ENCODE measurements at regions of chr3 and their contacts with region 1.

Region 1: DNA sequence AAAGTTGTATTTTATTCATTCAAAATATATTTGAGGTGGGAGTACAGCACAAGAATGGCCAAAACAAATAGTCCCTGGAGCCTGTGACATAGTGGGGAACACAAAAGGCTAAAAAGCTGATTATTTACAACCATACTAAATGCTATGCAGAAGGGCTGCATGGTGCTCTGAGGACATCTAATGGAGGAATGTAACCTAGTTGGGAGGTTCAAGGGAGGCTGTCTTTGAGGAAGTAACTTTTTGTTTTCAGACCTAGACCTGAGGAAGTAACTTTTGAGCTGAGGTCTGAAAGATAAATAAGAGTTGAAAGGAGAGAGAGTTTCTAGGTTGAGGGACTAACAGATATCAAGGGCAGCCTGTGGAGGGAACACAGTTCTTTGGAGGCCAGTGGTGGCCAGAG is 34.8 kb upstream of the RASA2 start:
- DNase-seq: no peak
- ATAC-seq: peak; percentile 77 to 86 (median 82)
- H3K4me3 ChIP-seq: no peak overlapping the region
- H3K27ac ChIP-seq: no peak overlapping the region
- H3K4me1 ChIP-seq: no peaks in the 10 kb centered on the region
- H3K27me3 ChIP-seq: no peaks in the 10 kb centered on the region
- CTCF ChIP-seq: peak; percentile 67 to 82 (median 68)
- POLR2A ChIP-seq: no peak

Region 2: GRCh38 chr3:141094790-141095545 is 357.1 kb before region 1 on chr3:
- intact Hi-C with region 1: no loop called
- DNase-seq: no peak
- ATAC-seq: peak in 1 of 4 donors; percentile 45
- H3K4me3 ChIP-seq: no peak overlapping the region
- H3K27ac ChIP-seq: no peak overlapping the region
- H3K4me1 ChIP-seq: no peaks in the 10 kb centered on the region
- H3K27me3 ChIP-seq: no peaks in the 10 kb centered on the region
- CTCF ChIP-seq: no peak
- POLR2A ChIP-seq: no peak

Region 3: GRCh38 chr3:141303481-141304223 is 148.4 kb before region 1 on chr3:
- intact Hi-C with region 1: loop called (anchors 5 to 10 kb)
- DNase-seq: no peak
- ATAC-seq: peak; percentile 80 to 88 (median 84)
- H3K4me3 ChIP-seq: no peak overlapping the region
- H3K27ac ChIP-seq: no peak overlapping the region
- H3K4me1 ChIP-seq: peaks cover 0 to 2% (median 0%) of the 10 kb centered on the region in 4 donors
- H3K27me3 ChIP-seq: no peaks in the 10 kb centered on the region
- CTCF ChIP-seq: peak; percentile 74 to 86 (median 83)
- POLR2A ChIP-seq: no peak

Region 4: DNA sequence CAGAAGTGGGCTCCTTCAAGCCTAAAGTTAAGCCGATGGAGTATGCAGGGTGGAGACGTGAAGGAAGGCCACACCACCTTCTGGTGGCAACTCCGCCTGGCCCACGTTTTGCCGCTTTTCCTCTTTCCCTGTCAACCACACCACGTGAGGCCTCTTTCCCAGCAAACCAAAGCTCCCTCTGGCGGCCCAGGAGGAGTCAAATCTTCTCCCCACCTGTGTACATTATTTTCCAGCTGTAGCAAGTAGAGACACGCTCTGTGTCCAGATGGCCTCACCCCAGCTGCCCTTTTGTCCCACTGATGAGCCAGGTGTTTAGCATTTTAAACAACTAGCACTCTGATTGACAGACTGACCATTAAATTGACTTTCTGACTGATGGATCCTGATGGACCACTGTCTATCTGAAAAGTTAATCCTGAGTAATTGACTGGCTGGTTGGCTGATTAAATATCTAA is 143.4 kb before region 1 on chr3:
- intact Hi-C with region 1: loop called (anchors 5 to 10 kb)
- DNase-seq: peak; percentile 75 to 82 (median 81)
- ATAC-seq: peak; percentile 64 to 74 (median 70)
- H3K4me3 ChIP-seq: no peak overlapping the region
- H3K27ac ChIP-seq: peak overlapping the region in 1 of 3 donors; percentile 20
- H3K4me1 ChIP-seq: peaks cover 0 to 16% (median 3%) of the 10 kb centered on the region in 4 donors
- H3K27me3 ChIP-seq: no peaks in the 10 kb centered on the region
- CTCF ChIP-seq: peak; percentile 50 to 72 (median 62)
- POLR2A ChIP-seq: no peak

Region 5: GRCh38 chr3:141355242-141355641 is 96.8 kb before region 1 on chr3:
- intact Hi-C with region 1: loop called in 1 of 2 experiments (anchors 5 kb)
- DNase-seq: no peak
- ATAC-seq: peak in 1 of 4 donors; percentile 20
- H3K4me3 ChIP-seq: no peak overlapping the region
- H3K27ac ChIP-seq: no peak overlapping the region
- H3K4me1 ChIP-seq: no peaks in the 10 kb centered on the region
- H3K27me3 ChIP-seq: no peaks in the 10 kb centered on the region
- CTCF ChIP-seq: no peak
- POLR2A ChIP-seq: no peak

Region 6: GRCh38 chr3:141754032-141754431 is 302.0 kb after region 1 on chr3:
- intact Hi-C with region 1: no loop called
- DNase-seq: no peak
- ATAC-seq: no peak
- H3K4me3 ChIP-seq: no peak overlapping the region
- H3K27ac ChIP-seq: no peak overlapping the region
- H3K4me1 ChIP-seq: no peaks in the 10 kb centered on the region
- H3K27me3 ChIP-seq: no peaks in the 10 kb centered on the region
- CTCF ChIP-seq: no peak
- POLR2A ChIP-seq: no peak